GM13976 (cell line): ENCODE measurements at regions of chr16 and their contacts with region 1.

Region 1: DNA sequence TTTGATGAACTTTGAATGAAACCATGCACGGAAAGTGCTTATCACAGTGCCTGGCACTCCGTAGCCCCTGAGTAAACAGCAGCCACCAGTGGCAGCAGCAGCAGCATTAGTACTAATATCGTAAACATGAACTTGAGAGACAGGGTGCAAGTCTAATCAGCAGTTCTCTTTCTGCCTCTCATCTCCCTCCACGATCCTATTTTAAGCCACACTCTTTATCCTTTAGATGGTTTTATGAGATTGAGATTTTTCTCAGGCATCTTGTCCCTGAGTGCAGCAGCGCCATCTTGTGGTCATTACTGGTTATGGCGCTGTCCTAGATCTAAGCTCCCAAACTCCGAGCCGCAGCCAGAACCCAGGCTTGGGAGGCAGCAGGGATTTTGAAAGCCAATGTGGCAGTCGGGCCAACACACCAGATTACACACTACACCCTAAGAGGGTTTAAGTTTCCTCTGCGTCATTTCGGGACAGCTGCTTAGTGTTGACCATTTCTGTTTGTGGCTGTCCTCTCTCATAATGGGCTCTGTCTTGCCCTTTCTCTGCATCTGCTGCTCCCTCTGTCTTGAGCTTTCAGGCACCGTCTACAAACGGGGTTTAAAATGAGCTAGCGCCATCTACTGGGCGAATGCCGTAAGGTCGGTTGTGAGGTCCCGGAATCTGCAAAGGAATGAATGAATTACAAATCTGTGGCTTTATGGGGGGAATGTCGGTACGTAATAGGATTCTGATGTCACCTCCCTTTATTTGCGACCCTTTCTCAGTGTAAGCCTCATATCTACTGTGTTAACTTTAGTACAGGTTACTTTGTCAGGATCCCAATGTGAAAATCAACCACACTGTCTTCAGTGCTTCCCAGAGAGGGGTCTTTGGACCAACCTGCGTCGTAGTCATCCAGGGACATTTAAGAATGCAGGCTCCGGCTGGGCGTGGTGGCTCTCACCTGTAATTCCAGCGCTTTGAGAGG is 64.5 kb downstream of the CYLD start:
- DNase-seq: peak; percentile 82
- CTCF ChIP-seq: peak; percentile 95

Region 2: DNA sequence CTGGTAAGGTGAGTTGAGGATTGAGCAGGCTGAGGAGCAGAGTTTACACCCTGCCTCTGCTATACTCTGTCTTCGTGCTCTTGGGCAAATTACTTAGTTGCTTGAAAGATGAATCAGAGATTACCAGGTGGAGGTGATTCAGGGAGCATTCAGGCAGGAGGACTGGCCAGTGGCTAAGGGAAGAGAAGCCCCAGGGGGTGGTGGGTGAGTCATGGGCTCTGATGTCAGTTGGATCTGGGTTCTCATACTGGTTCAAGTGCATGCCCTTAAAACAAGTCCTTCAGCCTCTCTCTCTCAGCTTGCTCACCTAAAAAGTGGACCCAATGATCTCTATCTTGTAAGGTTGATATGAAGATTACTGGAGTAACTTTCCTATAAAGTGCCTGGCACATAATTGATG is 409.2 kb before region 1 on chr16:
- in situ Hi-C with region 1: loop called (anchors 25 kb)
- DNase-seq: no peak
- CTCF ChIP-seq: no peak

Region 3: DNA sequence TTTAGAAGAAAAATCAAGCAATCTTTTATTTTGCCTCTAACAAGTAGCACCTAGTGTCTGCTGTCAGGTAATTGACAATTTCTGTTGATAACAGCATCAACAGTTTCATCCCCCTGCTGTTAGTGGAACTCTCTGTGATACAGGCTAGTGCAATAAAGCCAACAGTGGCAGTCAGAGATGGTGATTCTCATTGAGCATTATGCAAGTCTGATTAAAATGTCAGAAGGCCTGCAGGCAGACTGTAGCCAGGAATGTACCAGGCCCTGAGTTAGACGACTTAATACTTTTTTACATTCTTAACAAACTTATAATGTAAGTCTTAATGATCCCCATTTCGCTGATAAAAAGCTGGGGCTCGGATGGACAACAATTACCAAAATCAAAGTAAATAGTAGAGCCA is 49.9 kb before region 1 on chr16:
- in situ Hi-C with region 1: no loop called
- DNase-seq: no peak
- CTCF ChIP-seq: no peak

Region 4: GRCh38 chr16:51222016-51222415 is 415.6 kb after region 1 on chr16:
- in situ Hi-C with region 1: no loop called
- DNase-seq: no peak
- CTCF ChIP-seq: no peak